PC-3 (cell line): ENCODE measurements at regions of chr21 and their contacts with region 1.

Region 1: GRCh38 chr21:42337830-42338728 is 12.7 kb downstream of the TFF2 start:
- DNase-seq: peak; percentile 95
- ATAC-seq: peak; percentile 92
- H3K4me3 ChIP-seq: peak overlapping the region; percentile 41
- H3K27ac ChIP-seq: peak overlapping the region; percentile 94
- H3K4me1 ChIP-seq: peaks cover 15% of the 10 kb centered on the region
- H3K27me3 ChIP-seq: no peaks in the 10 kb centered on the region
- CTCF ChIP-seq: peak; percentile 92

Region 2: GRCh38 chr21:41589131-41589530 is 748.9 kb before region 1 on chr21:
- CTCF ChIA-PET with region 1: no interaction called
- POLR2A ChIA-PET with region 1: no interaction called
- intact Hi-C with region 1: no loop called
- DNase-seq: no peak
- ATAC-seq: no peak
- H3K4me3 ChIP-seq: no peak overlapping the region
- H3K27ac ChIP-seq: no peak overlapping the region
- H3K4me1 ChIP-seq: peaks cover 6% of the 10 kb centered on the region; the same call in 1 of the 2 replicates
- H3K27me3 ChIP-seq: no peaks in the 10 kb centered on the region
- CTCF ChIP-seq: peak; percentile 49

Region 3: GRCh38 chr21:42350896-42351543 is 12.9 kb after region 1 on chr21 and contains the start of gene TFF2:
- CTCF ChIA-PET with region 1: interaction called, 5 read pairs
- POLR2A ChIA-PET with region 1: no interaction called
- intact Hi-C with region 1: loop called (anchors 1 kb)
- DNase-seq: peak; percentile 76
- ATAC-seq: peak; percentile 91
- H3K4me3 ChIP-seq: no peak within 1 kb of the TSS
- H3K27ac ChIP-seq: peak within 1 kb of the TSS; percentile 87
- H3K4me1 ChIP-seq: peaks cover 25% of the 10 kb centered on the region
- H3K27me3 ChIP-seq: no peaks in the 10 kb centered on the region
- CTCF ChIP-seq: no peak
- total RNA-seq, gene TFF2: 21.1 and 22.9 TPM in 2 replicates